CD4-positive, alpha-beta T cell (primary cell): ENCODE measurements at regions of chr1 and their contacts with region 1.

Region 1: DNA sequence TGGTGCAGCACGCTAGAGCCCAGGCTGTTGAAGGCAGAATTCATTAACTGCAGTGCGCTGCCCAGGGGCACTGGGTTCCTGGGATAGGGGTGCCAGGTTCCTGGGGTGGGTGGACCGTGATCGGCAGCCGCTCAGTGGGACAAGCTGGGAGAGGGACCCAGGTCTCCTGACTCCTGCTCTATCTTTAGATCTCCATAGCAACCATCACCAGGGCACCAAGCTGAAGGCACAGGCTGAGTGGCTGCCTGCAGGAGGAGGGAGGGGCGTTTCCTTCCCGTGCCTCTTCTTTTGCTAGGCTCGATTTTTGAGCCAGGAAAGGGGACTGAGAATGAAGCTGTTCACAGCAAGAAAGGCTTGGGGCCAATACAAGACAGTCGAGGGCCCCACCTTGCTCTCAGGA is 20.9 kb upstream of the CDCP2 start:
- DNase-seq: no peak
- ATAC-seq: no peak
- H3K4me3 ChIP-seq: no peak overlapping the region
- H3K4me3 Mint-ChIP-seq: no peak overlapping the region
- H3K27ac ChIP-seq: no peak overlapping the region
- H3K27ac Mint-ChIP-seq: no peak overlapping the region
- H3K4me1 ChIP-seq: peaks cover 7% of the 10 kb centered on the region
- H3K4me1 Mint-ChIP-seq: peaks cover 13% of the 10 kb centered on the region
- H3K27me3 ChIP-seq: no peaks in the 10 kb centered on the region
- H3K27me3 Mint-ChIP-seq: no peaks in the 10 kb centered on the region
- CTCF ChIP-seq: no peak

Region 2: DNA sequence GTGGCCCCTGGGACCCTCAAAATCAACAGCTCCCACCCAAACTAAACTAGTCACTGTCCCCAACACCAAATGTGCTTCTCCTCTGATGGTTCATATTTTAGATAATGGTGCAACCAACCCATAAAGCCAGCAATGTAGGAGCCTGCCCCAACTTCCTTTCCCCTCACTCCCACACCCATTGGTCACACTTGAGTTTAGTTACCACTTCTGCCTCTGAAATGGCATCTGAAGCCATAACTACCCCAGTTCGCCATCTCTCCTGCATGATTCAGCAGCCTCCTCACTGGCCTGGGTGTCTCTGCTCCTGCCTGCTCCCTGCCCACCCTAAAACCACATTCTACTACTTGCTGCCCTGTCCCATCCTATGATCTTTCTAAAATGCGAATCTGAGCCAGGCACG is 17.5 kb before region 1 on chr1:
- CTCF ChIA-PET with region 1: no interaction called
- POLR2A ChIA-PET with region 1: no interaction called
- intact Hi-C with region 1: loop called in 1 of 2 experiments (anchors 2 kb)
- DNase-seq: no peak
- ATAC-seq: no peak
- H3K4me3 ChIP-seq: no peak overlapping the region
- H3K4me3 Mint-ChIP-seq: no peak overlapping the region
- H3K27ac ChIP-seq: no peak overlapping the region
- H3K27ac Mint-ChIP-seq: no peak overlapping the region
- H3K4me1 ChIP-seq: no peaks in the 10 kb centered on the region
- H3K4me1 Mint-ChIP-seq: no peaks in the 10 kb centered on the region
- H3K27me3 ChIP-seq: no peaks in the 10 kb centered on the region
- H3K27me3 Mint-ChIP-seq: no peaks in the 10 kb centered on the region
- CTCF ChIP-seq: no peak